AG04449 (cell line): ENCODE measurements at regions of chr18 and their contacts with region 1.

Region 1: GRCh38 chr18:49944663-49945062 is 131.3 kb upstream of the ACAA2 start:
- DNase-seq: no peak
- H3K4me3 ChIP-seq: no peak overlapping the region
- CTCF ChIP-seq: peak; percentile 27

Region 2: GRCh38 chr18:50203801-50204604 is 259.3 kb after region 1 on chr18:
- CTCF ChIA-PET with region 1: interaction called, 17 read pairs
- POLR2A ChIA-PET with region 1: no interaction called
- DNase-seq: no peak
- H3K4me3 ChIP-seq: no peak overlapping the region; the same call in 1 of the 2 replicates
- CTCF ChIP-seq: peak; percentile 59